Pancreas (tissue), 10 donors: ENCODE measurements at regions of chr15 and their contacts with region 1.

Region 1: DNA sequence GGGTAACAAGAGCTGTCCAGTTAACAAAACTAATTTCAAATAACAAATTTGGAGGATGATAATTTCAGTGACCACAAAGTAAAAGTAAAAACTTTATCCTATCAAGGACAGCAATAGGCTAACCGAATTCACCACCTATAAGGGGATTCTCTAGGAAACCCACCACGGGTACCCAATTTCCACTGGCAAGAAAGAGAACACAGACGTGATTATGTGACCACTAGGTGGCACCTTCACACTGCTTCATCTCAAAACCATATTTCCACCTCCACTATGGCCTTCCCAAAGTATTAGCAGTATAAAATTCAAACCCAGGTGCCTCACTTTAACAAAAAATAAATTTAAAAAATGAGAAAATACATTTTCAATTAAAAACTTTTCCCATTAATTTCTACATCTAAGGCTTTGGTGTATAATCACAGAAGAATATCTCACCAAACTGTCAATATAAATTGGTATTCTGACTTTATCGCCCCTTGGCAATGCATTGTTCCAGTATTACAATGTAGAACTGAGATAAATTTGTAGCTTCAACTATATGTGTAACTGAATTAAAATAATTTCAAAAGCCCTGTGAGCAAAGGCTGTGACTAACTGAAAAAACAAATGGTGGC is 96.5 kb downstream of the FSIP1 start:
- DNase-seq: peak in 2 of 6 donors; percentile 6 to 40
- ATAC-seq: peak in 3 of 4 donors; percentile 79 to 82 (median 81)
- H3K4me3 ChIP-seq: no peak overlapping the region
- H3K27ac ChIP-seq: no peak overlapping the region
- H3K4me1 ChIP-seq: no peaks in the 10 kb centered on the region
- H3K27me3 ChIP-seq: no peaks in the 10 kb centered on the region
- CTCF ChIP-seq: peak; percentile 39 to 76 (median 74)

Region 2: DNA sequence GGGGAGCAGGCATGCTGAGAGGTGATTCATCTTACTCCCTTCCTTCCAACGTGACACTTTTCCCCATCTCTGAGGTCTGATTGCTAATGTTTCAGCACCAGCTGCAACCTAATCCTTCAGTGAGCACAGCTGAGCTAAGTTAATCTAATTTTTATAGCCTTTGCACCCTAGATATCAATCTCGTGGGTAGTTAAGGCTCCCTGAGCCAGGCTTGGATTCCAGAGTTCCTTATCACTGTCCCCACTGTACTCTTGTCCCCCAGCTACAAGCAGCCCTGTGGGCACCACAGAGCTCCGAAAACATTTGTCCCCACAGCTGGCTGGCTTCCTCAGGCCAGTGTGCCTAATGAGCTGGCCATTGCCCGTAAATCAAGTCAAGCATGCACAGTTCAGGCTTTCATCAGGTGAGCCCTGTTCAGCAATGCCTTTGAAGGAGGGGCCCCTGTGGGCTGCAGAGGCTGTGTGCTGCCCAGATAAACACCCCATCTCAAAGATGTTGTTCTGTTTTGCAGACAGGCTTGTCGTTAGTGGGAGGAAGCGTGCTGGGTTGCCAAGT is 744.6 kb before region 1 on chr15:
- intact Hi-C with region 1: no loop called
- DNase-seq: no peak
- ATAC-seq: no peak
- H3K4me3 ChIP-seq: no peak overlapping the region
- H3K27ac ChIP-seq: no peak overlapping the region
- H3K4me1 ChIP-seq: peaks cover 0 to 10% (median 0%) of the 10 kb centered on the region in 3 donors
- H3K27me3 ChIP-seq: no peaks in the 10 kb centered on the region
- CTCF ChIP-seq: no peak

Region 3: GRCh38 chr15:39756806-39757522 is 70.9 kb after region 1 on chr15:
- intact Hi-C with region 1: loop called in 2 of 3 experiments (anchors 5 to 10 kb)
- DNase-seq: peak in 1 of 6 donors; percentile 24
- ATAC-seq: peak in 2 of 4 donors; percentile 53
- H3K4me3 ChIP-seq: no peak overlapping the region
- H3K27ac ChIP-seq: no peak overlapping the region
- H3K4me1 ChIP-seq: no peaks in the 10 kb centered on the region
- H3K27me3 ChIP-seq: no peaks in the 10 kb centered on the region
- CTCF ChIP-seq: peak; percentile 59 to 81 (median 74)

Region 4: GRCh38 chr15:39887832-39888231 is 201.7 kb after region 1 on chr15:
- intact Hi-C with region 1: no loop called
- DNase-seq: peak in 3 of 6 donors; percentile 16 to 38 (median 17)
- ATAC-seq: peak; percentile 83 to 96 (median 92)
- H3K4me3 ChIP-seq: no peak overlapping the region
- H3K27ac ChIP-seq: peak overlapping the region in 1 of 4 donors; percentile 34
- H3K4me1 ChIP-seq: peaks cover 10 to 17% (median 11%) of the 10 kb centered on the region in 3 donors
- H3K27me3 ChIP-seq: no peaks in the 10 kb centered on the region
- CTCF ChIP-seq: peak in 1 of 4 donors; percentile 11

Region 5: GRCh38 chr15:39944726-39945125 is 258.6 kb after region 1 on chr15:
- intact Hi-C with region 1: no loop called
- DNase-seq: no peak
- ATAC-seq: peak in 2 of 4 donors; percentile 38 to 46
- H3K4me3 ChIP-seq: no peak overlapping the region
- H3K27ac ChIP-seq: no peak overlapping the region
- H3K4me1 ChIP-seq: no peaks in the 10 kb centered on the region
- H3K27me3 ChIP-seq: no peaks in the 10 kb centered on the region
- CTCF ChIP-seq: no peak